ENCODE measurements at regions of chr7 and their contacts with region 1.

Region 1: DNA sequence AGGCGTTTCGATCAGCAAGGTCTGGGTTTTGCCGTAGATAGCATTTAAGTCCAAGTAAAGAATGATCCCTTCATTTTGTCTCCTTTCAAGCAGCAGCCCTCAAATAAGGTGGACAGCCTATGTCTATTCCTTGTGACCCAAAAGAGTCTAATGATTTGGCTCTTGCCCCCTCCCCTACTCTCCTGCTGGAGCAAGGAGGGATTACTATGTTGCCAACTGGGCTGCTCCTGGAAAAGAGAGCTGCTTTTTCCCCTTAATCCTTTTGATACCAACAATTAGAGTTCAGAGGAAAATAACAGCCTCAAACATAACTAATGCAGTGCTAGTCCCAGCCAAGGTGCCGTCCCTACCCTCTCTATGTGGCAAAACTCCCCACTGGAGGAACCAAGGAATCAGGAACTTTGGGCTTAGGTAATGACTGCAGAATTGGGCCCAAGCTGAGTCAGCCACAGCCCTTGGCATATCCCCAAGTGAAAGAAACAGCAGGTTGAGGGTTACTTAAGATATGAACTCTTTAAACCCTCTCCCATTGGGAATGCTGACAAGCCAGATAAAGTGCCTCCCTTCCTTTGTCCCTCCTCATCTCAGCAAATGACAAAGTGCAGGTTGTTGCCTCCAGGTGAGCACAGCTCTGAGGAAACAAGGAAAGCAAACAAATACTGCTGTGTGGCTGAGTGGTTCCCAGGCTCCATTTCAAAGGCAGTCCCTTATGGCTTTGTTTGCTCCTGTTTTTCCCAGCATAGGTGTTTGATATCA is 643.7 kb downstream of the INHBA start:
- DNase-seq: peak; percentile 72
- H3K4me3 Mint-ChIP-seq: no peak overlapping the region
- H3K27ac Mint-ChIP-seq: no peak overlapping the region
- H3K4me1 Mint-ChIP-seq: peaks cover 8% of the 10 kb centered on the region
- H3K27me3 Mint-ChIP-seq: no peaks in the 10 kb centered on the region
- CTCF ChIP-seq: no peak

Region 2: DNA sequence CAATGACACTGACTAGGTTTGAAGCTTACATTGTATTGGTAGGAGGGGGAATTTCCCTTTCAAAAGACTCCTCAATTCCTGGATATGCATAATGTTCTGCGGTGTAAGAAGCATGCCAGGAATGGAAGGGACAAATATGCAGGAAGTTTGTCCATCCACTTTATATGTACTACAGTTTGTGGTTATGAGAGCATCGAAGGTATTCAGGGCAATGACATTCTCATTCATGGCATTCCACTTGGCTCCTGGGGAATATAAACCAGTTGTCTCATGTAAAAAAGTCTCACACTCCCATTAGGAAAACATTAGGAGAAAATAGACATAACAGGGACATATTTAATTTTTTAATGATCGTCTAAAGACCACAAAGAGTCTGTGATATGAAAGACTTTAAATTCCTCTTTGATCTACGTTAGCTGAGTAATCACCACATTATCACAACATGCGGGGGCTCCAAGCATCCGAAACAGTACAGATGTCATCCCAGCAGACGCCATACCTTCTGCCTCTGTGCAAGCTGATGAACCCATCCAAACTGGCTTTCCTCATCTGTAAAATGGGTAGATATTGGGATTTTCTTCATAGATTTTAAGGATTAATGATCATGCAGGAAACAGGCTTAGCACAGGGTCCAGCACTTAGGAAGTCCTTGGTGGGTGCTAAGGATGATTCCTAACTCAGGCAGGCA is 31.6 kb before region 1 on chr7:
- CTCF ChIA-PET with region 1: no interaction called
- POLR2A ChIA-PET with region 1: no interaction called
- intact Hi-C with region 1: no loop called
- DNase-seq: peak; percentile 51
- H3K4me3 Mint-ChIP-seq: no peak overlapping the region
- H3K27ac Mint-ChIP-seq: no peak overlapping the region
- H3K4me1 Mint-ChIP-seq: peaks cover 24% of the 10 kb centered on the region
- H3K27me3 Mint-ChIP-seq: no peaks in the 10 kb centered on the region
- CTCF ChIP-seq: no peak

Region 3: DNA sequence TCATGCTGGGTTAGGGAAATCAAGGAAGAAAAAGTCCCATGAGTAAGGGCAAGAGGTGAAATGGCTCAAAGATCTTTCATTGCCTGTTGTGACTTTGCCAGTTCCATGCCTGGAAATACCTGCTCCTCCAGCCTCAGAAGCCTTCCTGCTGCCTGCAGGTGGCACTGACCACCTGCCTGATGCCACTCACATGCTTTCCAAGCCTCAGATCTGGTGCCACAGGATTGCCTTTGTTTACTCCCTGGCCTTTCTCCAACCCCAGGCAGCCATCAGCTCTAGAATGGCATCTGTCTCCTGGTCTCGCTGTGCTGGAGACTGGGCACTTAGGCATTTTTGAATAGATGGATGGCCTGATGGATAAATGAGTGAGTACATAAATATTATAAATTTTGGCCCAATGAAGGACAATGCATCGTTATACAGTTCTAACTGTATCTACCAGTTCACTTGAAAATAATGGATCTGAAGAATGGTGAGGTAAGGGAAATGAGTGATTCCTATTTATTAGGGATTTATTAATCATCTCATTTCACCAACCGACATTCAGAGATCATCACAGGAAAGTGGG is 13.5 kb before region 1 on chr7:
- CTCF ChIA-PET with region 1: interaction called, 11 read pairs
- POLR2A ChIA-PET with region 1: no interaction called
- intact Hi-C with region 1: no loop called
- DNase-seq: peak; percentile 74
- H3K4me3 Mint-ChIP-seq: no peak overlapping the region
- H3K27ac Mint-ChIP-seq: no peak overlapping the region
- H3K4me1 Mint-ChIP-seq: peaks cover 21% of the 10 kb centered on the region
- H3K27me3 Mint-ChIP-seq: no peaks in the 10 kb centered on the region
- CTCF ChIP-seq: peak; percentile 38

Region 4: DNA sequence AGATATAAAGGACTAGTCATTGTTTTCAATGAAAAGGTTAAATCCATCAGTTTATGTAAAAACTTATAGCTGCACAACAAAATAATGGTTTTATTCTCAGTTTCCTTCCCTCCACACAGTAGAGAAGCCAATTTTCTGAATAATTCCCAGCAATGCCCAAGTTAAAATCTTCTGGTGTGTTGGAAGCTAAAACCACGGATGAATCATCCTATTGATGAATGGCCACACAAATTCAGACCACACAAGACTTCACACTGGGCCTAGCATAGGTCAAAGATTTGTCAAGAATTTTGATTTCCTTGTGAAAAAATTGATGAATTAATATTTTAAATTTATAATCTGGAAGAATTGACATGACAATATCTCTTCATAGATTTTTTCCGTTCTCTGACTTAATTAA is 26.1 kb after region 1 on chr7:
- CTCF ChIA-PET with region 1: no interaction called
- POLR2A ChIA-PET with region 1: no interaction called
- intact Hi-C with region 1: no loop called
- DNase-seq: peak; percentile 29
- H3K4me3 Mint-ChIP-seq: no peak overlapping the region
- H3K27ac Mint-ChIP-seq: no peak overlapping the region
- H3K4me1 Mint-ChIP-seq: no peaks in the 10 kb centered on the region
- H3K27me3 Mint-ChIP-seq: no peaks in the 10 kb centered on the region
- CTCF ChIP-seq: no peak

Region 5: DNA sequence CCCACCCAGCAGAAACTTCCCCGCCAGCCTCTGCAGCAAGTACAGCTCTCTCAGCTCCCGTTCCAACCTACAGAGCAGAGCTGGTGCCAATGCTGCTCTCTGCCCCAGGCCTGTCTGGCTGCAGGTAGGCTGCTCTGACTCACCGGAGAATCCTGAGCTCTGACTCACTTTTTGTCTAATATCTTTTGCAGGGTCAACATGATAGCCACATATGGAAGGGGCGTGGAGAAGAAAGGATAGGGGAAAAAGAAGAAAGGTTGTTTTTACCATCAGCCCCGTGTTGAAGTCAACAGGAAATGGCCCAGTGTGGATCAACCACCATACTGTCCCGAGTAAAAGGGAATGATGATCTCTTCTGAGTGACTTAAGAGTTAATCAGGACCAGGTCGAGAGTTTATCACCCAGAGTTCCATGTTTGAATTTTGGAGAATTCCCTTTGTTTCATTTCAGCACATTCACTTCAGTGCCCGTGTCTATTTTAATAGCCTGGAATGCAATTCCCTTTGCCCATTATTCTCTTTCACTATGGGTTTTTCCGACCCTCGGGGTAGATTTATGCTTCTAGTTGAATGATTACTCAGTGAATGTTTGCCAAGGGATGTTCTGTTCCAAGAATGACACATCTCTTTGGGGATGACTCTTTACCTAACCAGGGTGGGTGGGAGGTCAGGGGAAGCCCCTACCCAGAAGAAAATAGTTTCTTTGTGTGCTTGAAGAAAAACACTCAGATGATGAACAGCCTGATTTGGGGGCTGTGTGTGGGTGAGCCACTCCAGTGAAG is 48.7 kb after region 1 on chr7:
- CTCF ChIA-PET with region 1: interaction called, 6 read pairs
- POLR2A ChIA-PET with region 1: no interaction called
- intact Hi-C with region 1: loop called (anchors 10 kb)
- DNase-seq: peak; percentile 93
- H3K4me3 Mint-ChIP-seq: peak overlapping the region; percentile 48
- H3K27ac Mint-ChIP-seq: peak overlapping the region; percentile 52
- H3K4me1 Mint-ChIP-seq: peaks cover 45% of the 10 kb centered on the region
- H3K27me3 Mint-ChIP-seq: no peaks in the 10 kb centered on the region
- CTCF ChIP-seq: no peak

Measured in MCF 10A (cell line).